Left ventricle myocardium superior (tissue), 1 donor: ENCODE measurements at regions of chr1 and their contacts with region 1.

Region 1: GRCh38 chr1:48931506-48932251 is 155.0 kb upstream of the BEND5 start:
- DNase-seq: no peak
- ATAC-seq: no peak

Region 2: GRCh38 chr1:48697066-48697707 is 234.5 kb before region 1 on chr1:
- intact Hi-C with region 1: loop called (anchors 5 kb)
- DNase-seq: peak; percentile 73
- ATAC-seq: peak; percentile 36

Region 3: DNA sequence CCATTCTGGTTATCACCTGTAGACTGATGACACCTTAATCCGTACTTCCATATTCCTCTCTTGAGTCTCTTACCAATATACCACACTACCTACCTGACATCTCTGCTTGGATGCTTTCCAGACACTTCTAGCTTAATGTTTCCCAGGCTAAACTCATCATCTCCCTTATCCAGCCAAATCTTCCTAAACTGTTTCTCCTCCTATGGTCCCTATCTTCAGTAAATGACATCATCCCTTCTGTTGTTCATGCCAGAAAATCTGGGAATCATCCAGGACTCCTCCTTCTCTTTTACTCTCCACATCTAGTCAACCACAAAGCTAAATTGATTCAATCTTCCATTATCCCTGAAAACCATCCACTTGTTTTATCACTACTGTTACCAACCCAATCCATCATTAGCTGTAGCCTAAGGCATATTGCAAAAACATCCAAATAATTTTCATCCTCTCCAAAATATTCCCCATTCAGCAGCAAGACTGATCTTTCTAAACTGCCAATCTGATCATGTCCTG is 309.1 kb after region 1 on chr1:
- intact Hi-C with region 1: no loop called
- DNase-seq: no peak
- ATAC-seq: no peak